HEK293 (cell line): ENCODE measurements at regions of chr11 and their contacts with region 1.

Region 1: DNA sequence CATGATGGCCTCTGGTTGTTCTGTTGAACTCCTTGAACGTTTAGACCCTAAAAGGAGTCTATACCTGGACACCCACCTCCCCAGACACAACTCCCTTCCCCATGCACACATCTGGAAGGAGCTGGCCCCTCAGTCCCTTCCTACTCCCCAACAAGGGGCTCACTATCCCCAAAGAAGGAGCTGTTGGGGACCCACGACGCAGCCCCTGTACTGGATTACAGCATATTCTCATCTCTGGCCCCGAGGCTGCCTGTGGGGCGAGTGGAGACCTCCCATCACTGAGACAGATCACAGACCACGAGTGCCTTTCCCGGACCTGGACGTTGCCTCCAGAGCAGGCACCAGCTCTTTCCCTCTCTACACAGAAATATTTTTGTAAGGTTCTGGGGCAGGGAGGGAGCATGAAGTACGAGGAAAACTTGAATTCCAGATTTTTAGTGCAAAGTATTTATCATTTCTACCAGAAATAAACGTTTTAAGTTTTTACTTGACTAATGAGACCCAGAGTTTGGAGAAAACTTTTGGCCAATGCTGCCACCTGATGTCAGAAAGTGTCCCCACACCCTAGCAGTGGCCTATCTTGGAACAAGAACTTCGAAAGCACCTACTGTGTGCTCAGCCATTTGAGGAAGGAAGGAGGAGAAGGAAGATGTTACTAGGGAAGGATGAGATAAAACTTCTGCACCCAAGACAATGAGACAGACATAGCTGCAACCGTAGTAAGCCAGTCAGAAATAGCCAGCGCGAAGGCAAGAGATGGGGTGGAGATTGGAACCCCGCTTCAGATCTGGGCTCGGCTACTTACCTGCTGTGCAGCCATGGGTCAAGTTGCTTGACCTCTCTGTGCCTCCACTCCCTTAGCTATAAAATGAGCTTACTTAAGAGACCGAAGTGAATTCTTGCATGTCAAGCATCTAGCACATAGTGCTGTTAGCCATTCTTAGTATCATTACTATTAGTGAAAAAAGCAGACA is 10.2 kb upstream of the POU2F3 start:
- H3K4me3 ChIP-seq: no peak overlapping the region
- H3K27ac ChIP-seq: no peak overlapping the region
- H3K4me1 ChIP-seq: no peaks in the 10 kb centered on the region
- CTCF ChIP-seq: no peak

Region 2: GRCh38 chr11:120180551-120181232 is 49.0 kb before region 1 on chr11:
- CTCF ChIA-PET with region 1: interaction called, 103 read pairs
- POLR2A ChIA-PET with region 1: no interaction called
- H3K4me3 ChIP-seq: no peak overlapping the region
- H3K27ac ChIP-seq: no peak overlapping the region
- H3K4me1 ChIP-seq: no peaks in the 10 kb centered on the region
- CTCF ChIP-seq: no peak

Region 3: DNA sequence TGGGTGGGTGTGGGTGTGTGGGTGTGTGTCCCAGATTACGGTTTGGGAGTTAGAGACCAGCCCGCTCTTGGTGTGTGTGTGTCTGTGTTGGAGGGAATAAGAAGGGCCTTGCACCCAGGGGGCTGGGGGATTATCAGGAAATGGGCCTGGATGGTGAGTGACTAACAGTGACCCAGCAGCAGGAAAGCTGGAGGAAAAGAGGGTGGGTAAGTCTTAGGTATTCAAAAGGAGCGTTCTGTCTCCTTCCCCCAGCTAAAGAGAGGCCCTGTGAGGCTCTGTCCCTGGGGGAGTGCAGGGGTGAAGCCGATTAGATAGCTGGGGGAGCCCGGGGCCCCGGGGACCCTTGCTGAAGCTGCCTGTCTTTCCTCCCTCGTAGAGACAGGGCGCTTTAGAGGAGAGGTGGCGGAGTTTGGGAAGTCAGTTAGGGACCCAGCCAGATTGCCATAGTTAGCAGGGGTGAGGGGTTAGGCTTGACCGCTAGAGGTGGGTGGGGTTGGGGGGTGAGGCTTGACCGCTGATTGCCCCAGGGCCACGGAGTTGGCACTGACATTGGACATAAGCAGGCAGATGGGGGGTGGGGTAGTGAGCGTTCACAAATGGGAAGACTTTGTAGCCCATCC is 17.4 kb before region 1 on chr11:
- CTCF ChIA-PET with region 1: interaction called, 10 read pairs
- POLR2A ChIA-PET with region 1: no interaction called
- H3K4me3 ChIP-seq: no peak overlapping the region
- H3K27ac ChIP-seq: no peak overlapping the region
- H3K4me1 ChIP-seq: peaks cover 7% of the 10 kb centered on the region; the same call in 1 of the 2 replicates
- CTCF ChIP-seq: no peak

Region 4: DNA sequence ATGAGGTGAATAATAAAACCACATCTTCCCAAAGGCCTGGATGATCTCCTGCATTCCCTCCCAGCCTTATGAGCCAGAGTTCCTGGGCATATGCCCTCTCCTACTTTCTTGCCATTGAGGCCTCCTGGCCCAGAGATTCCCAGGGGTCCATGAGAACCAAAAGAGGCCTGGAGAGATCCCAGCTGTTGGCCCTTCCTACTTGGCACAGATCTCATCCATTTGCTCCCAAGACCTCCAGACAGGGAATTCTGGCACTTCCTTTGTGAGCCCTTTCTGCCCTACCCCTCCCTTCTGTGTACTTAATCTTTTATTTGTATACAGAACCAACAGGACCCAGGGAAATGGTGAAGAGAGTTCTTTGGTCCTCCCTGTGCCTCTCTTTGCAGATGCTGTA is 31.6 kb after region 1 on chr11:
- CTCF ChIA-PET with region 1: no interaction called
- POLR2A ChIA-PET with region 1: no interaction called
- H3K4me3 ChIP-seq: no peak overlapping the region
- H3K27ac ChIP-seq: no peak overlapping the region
- H3K4me1 ChIP-seq: no peaks in the 10 kb centered on the region
- CTCF ChIP-seq: no peak